Posterior vena cava (tissue), 2 donors: ENCODE measurements at regions of chr12 and their contacts with region 1.

Region 1: GRCh38 chr12:12999959-13000615 is at the start of gene HEBP1:
- DNase-seq: peak; percentile 99
- total RNA-seq, gene HEBP1: 56.4 to 63.2 TPM

Region 2: DNA sequence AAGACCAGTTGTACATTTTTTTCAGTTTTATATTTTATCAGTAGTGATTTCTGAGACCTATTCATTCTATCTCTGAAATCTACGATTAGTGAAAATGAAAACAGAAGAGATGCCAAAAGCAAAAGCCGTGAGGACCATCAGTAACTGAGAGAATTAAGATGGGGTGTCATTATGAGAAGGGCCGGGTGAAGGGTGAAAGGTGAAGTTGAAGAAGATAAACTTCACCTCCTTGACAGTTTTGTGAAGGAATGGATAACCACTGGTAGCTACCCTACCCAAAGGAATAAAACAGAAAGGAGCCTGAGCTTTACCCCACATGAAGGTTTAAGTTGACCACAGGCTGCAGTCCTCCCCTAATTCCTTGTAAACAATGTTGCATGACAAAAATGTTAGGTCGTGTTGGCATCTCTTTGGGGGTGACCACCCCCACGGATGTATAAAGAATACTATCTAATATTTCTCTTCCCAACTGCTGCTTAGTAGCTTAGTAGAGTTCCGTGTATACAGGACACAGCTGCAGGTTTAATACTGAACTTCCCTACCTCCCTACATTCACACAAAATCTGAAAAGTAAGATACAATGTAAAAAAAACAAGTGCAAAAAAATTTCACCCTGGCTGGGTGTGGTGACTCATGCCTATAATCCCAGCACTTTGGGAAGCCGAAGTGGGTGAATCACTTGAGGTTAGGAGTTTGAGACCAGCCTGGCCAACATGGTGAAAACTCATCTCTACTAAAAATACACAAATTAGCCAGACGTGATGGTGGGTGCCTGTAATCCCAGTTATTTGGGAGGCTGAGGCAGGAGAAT is 328.0 kb before region 1 on chr12:
- intact Hi-C with region 1: no loop called
- DNase-seq: no peak

Region 3: GRCh38 chr12:12813120-12814101 is 186.7 kb before region 1 on chr12 and contains the start of gene DDX47:
- intact Hi-C with region 1: loop called in 1 of 2 experiments (anchors 10 kb)
- DNase-seq: peak; percentile 99
- total RNA-seq, gene DDX47: 40.9 to 43.1 TPM

Region 4: DNA sequence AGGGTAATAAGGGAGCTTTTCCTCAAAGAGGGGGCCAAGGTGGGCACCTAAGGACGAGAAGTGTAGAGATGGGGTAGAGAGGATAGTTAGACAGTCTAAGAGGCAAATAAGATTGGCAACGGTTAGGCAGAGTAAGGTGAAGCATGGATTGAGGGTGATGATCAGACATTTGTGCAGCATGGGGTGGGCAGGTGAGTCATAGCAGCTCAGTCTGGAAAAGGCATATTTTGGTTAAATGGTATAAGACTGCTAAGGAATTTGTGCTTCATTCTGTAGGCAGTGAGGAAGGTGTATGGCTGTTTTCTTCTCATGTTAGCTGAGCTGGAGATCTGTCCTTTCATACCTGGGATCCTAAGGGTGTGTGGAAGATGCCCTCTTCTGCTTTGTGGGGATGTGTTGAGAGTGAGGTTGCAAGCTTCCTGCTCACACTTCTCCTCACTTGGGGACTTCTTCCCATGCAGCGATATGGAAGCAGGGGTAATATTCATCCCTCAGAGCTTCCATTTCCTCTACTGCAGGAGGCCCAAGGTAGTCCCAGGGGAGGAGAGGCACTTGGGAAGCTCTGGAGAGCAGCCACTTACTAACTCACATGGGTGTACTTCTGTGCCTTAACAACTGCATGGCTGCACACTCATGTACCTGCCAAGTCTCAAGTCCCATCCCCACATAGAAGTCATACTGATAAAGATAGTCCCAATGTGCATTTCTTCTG is 74.5 kb after region 1 on chr12:
- intact Hi-C with region 1: no loop called
- DNase-seq: no peak

Region 5: GRCh38 chr12:13114251-13115052 is 114.4 kb after region 1 on chr12:
- intact Hi-C with region 1: no loop called
- DNase-seq: no peak

Region 6: DNA sequence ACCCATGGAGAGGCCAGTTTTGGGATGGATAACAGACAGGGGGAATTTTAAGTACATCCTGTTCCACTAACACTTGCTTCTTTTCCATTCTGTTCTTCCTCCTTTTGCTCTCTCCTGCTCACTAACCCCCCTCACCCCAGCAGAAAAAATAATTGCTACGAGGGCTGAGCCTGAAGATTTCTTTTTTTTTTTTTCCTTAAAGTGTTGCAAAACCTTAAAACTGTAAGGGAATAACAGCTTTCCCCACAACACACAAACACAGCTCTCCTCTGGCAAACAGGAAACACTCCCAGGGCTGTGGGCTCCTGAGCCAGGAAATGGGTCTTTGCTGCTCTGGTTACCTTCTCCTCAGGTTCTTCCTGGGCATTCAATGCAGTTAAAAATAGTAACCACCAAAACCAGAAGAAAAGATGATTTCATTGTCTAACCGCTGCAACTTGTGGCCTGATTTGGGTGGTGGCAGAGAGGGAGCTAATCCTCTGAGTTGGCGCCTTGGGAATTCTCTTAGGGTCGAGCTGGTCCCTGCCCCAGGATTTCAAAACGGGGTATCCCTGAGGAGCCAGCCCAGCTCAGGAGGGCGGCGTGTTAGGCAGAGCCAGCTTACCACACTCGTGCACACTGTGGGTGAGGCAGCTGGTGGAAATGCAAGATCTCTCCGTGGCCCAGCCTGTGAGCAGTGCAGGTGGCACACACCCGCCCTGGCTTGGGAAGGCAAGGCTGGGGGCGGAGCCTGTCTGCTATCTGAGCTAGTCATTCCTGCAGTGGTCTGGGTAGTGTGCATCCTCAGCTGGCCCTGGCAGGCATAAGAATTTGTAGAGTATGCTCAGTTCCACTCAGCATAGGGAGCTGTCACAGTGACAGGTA is 179.4 kb after region 1 on chr12:
- intact Hi-C with region 1: no loop called
- DNase-seq: peak; percentile 86

Region 7: GRCh38 chr12:13203034-13203922 is 203.2 kb after region 1 on chr12:
- intact Hi-C with region 1: loop called in 1 of 2 experiments (anchors 5 kb)
- DNase-seq: peak; percentile 89